Naive thymus-derived CD8-positive, alpha-beta T cell (primary cell): ENCODE measurements at regions of chr4 and their contacts with region 1.

Region 1: DNA sequence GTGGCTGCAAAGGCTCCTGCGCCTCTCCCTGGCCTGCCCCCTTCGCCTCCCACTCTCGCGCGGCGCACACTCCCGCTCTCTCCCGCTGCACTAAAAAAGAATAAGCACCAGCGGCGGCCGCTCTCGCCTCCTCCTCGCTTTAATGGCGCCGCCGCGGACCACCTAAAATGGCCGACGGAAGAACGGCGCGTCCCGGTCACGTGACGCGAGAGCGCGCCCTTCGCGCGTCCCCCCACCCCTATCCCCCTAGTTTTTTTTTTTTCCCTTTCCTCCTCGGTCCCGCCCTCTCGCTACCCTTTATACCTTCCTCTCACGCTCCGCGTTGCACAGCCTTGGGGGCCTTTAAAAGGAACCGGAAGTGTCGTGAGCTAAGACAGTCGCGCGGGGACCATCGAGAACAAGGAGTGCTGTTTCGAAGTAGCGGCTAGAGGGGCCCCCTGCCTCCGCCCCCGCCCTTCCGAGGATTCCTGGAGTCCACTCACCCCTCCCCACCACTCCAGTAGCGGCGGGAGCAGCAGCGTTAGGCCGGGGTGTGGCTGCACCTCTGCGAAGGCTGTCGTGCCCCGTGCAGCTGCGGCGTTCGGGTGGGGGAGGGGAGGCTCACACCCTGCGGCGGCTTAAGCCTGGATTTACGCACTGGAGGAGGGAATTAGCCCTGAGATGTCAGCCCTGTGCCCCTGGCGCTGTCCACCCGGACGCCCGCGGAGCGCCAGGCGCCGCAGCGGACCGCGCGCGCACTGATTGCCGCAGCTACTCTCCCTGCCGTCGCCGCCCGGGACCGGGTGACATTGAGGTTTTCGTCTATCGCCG is at the start of gene HNRNPD:
- DNase-seq: peak; percentile 83 to 97 (median 91)
- ATAC-seq: peak; percentile 87 to 90
- H3K4me3 Mint-ChIP-seq: peak within 1 kb of the TSS; percentile 91 to 99 (median 97)
- H3K27ac Mint-ChIP-seq: peak within 1 kb of the TSS; percentile 97 to 100 (median 98)
- H3K4me1 Mint-ChIP-seq: peaks cover 21 to 59% (median 53%) of the 10 kb centered on the region in 4 donors
- H3K27me3 Mint-ChIP-seq: peaks cover 0 to 3% (median 0%) of the 10 kb centered on the region in 5 donors
- polyA plus RNA-seq, gene HNRNPD: 176 to 292 (median 232) TPM

Region 2: DNA sequence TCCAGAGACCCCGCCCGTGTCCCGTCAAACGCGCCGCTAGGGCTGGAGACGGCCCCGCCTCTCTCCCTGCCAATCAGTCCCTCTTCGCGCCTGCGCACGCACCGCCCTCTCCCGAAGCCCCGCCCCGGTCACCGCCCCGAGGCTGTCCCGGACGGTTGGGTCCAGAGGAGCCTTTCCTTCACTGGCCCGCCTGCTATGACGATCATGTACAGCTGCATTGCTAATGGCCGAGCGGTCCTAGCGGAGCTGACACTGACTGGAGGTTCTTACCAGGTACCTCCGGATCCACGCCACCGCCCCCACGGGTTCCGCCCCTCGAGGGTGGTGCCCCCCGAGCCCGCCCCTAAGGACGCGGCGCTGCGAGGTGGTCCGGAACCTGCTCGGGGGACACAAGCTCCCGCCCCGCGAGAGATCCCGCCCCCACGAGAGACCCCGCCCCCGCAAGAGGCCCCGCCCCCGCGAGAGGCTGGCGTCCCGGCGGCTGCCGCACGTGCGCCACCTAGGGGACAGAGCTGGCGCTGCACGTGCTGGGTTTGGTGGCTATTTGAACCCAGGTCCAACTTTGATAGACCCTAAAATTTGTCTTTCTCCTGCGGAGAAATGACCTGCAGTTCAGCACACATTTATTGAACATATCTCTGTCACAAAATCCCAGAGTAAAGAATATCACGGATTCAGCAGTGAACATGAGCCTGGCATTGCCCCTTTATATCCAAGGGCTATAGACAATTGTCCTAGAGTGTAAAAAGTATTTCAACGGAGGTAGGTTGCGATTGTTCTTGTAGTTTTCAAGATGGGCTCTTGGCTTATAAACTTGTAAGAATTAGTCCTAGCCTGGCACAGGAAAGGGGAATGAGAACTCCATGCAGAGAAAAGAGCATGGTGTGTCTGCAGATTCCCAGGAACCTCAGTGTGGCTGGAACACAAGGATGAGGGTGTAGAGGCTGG is 88.9 kb before region 1 on chr4:
- POLR2A ChIA-PET with region 1: interaction called, 10 read pairs
- DNase-seq: peak; percentile 99 to 100 (median 99)
- ATAC-seq: peak; percentile 92
- H3K4me3 Mint-ChIP-seq: peak overlapping the region; percentile 80 to 92 (median 88)
- H3K27ac Mint-ChIP-seq: peak overlapping the region; percentile 19 to 94 (median 88)
- H3K4me1 Mint-ChIP-seq: peaks cover 12 to 17% (median 15%) of the 10 kb centered on the region in 4 donors
- H3K27me3 Mint-ChIP-seq: no peaks in the 10 kb centered on the region

Region 3: GRCh38 chr4:82360298-82361177 is 13.5 kb before region 1 on chr4:
- POLR2A ChIA-PET with region 1: interaction called, 17 read pairs
- DNase-seq: peak in 3 of 10 donors; percentile 34 to 46 (median 40)
- ATAC-seq: peak; percentile 57 to 68
- H3K4me3 Mint-ChIP-seq: peak overlapping the region in 8 of 10 donors; percentile 0 to 72 (median 22)
- H3K27ac Mint-ChIP-seq: peak overlapping the region; percentile 2 to 78 (median 48)
- H3K4me1 Mint-ChIP-seq: peaks cover 33 to 95% (median 91%) of the 10 kb centered on the region in 4 donors
- H3K27me3 Mint-ChIP-seq: no peaks in the 10 kb centered on the region

Region 4: GRCh38 chr4:82423245-82424054 is 49.4 kb after region 1 on chr4:
- POLR2A ChIA-PET with region 1: interaction called, 193 read pairs
- DNase-seq: no peak
- ATAC-seq: peak in 1 of 2 donors; percentile 8
- H3K4me3 Mint-ChIP-seq: peak overlapping the region in 1 of 10 donors; percentile 28
- H3K27ac Mint-ChIP-seq: peak overlapping the region in 6 of 10 donors; percentile 0 to 88 (median 6)
- H3K4me1 Mint-ChIP-seq: peaks cover 24 to 60% (median 56%) of the 10 kb centered on the region in 4 donors
- H3K27me3 Mint-ChIP-seq: no peaks in the 10 kb centered on the region

Region 5: DNA sequence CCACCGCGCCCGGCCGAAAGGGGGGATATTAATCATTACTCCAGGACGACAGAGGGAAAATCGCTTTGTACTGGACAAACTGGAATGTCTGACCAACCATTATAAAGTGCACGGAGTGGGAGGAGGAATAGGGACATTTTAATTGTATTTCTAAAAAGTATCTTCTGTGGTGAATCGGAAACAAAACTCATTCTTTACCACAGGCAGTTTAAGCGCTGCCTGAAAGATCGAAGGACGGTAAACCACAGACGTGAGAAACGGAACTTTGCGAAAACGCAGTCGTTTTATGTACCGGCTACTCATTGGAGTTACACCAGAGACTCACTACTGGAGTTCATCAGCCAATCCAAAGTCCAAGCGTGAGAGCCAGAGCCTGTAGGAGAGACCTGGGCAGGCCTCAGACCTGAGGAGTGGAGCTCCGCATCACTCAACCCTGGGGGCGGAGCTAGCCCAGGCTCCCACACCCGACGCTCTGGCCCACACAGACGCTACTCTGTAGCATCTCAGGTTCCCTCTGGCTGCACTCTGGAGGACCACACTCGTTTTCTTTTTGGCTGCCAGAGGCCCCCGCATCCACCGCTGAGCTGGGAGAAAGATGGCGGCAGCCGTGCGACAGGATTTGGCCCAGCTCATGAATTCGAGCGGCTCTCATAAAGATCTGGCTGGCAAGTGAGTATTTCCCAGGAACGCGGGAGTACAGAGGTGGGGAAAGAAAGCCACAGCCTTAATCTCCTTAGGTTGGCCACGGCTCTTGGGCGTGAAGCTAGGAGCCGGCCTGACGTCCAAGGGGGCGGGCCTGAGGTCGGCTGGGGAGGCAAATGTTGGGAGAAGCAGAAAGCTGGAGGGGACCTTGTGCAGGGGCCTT is 660.8 kb after region 1 on chr4 and contains the start of gene COPS4:
- POLR2A ChIA-PET with region 1: interaction called, 18 read pairs
- DNase-seq: peak; percentile 83 to 98 (median 95)
- ATAC-seq: peak; percentile 94 to 96
- H3K4me3 Mint-ChIP-seq: peak within 1 kb of the TSS; percentile 91 to 100 (median 100)
- H3K27ac Mint-ChIP-seq: peak within 1 kb of the TSS; percentile 97 to 100 (median 99)
- H3K4me1 Mint-ChIP-seq: peaks cover 9 to 47% (median 36%) of the 10 kb centered on the region in 4 donors
- H3K27me3 Mint-ChIP-seq: peaks cover 0 to 1% (median 0%) of the 10 kb centered on the region in 5 donors
- polyA plus RNA-seq, gene COPS4: 58.4 to 62.5 (median 61.2) TPM